Ascending aorta (tissue), 2 donors: ENCODE measurements at regions of chr20 and their contacts with region 1.

Region 1: GRCh38 chr20:17542993-17543412 is 11.8 kb upstream of the BFSP1 start:
- DNase-seq: no peak
- H3K4me3 ChIP-seq: peak overlapping the region in 1 of 2 donors; percentile 10
- H3K27ac ChIP-seq: peak overlapping the region; percentile 69 to 86
- H3K4me1 ChIP-seq: peaks cover 18 to 41% of the 10 kb centered on the region in 2 donors
- H3K27me3 ChIP-seq: no peaks in the 10 kb centered on the region
- CTCF ChIP-seq: no peak

Region 2: DNA sequence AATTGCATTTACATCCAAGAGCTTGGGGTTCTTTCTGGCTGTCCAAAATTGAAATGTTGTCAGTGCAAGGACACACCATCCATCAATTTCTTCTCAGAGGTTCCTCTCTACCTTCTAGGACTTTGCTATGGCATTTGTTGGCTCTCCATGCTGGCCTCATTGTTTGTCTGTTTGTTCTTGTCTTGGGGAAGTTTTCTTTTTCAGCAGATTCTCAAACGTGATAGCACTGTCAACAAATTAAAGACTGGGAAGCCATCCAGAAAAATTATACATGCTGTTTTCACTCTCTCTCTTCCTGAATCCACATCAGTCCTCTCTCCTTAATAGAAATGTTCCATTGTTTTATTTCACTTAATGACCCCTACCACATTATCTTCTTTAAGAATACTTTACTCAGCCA is 185.8 kb before region 1 on chr20:
- intact Hi-C with region 1: no loop called
- DNase-seq: no peak
- H3K4me3 ChIP-seq: no peak overlapping the region
- H3K27ac ChIP-seq: no peak overlapping the region
- H3K4me1 ChIP-seq: no peaks in the 10 kb centered on the region
- H3K27me3 ChIP-seq: no peaks in the 10 kb centered on the region
- CTCF ChIP-seq: no peak

Region 3: DNA sequence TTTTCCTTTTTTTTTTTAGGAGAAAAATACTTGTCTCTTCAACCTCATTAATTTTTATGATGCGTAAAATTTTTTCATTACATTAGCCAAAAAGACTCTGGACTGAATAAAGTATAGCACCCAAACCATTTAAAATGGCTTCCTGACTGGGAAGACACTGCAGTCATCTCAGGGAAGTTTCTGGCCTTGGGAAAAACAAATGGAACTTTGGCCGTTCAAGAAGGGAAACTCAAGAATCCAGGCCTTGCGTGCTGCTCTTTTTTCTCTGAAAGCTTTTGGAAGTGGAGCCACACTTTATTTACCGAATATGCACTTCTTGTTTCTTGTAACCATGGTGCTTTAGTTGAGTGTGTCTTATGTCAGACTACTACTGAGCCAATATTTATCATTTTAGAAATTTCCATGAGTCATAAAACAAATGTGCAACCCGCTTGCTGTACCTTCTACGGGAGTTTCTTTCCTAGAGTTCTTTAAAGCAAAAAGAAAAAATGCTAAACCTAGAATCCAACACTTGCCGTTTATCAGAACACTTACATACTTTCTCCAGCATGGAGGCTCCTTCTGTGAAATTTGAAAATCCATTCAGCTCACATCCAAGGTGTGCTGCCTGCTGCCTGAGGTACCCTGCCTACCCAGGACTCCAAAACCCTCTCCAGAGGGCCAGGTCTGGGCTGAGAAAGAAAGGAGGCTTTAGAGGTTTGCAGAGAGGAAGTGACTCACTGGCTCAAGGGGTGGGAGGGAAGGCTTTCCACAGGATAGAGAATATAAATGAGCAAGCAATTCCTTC is 15.3 kb after region 1 on chr20:
- intact Hi-C with region 1: loop called (anchors 1 kb)
- DNase-seq: peak; percentile 53 to 92
- H3K4me3 ChIP-seq: peak overlapping the region; percentile 8 to 43
- H3K27ac ChIP-seq: peak overlapping the region; percentile 98 to 100
- H3K4me1 ChIP-seq: peaks cover 24 to 64% of the 10 kb centered on the region in 2 donors
- H3K27me3 ChIP-seq: no peaks in the 10 kb centered on the region
- CTCF ChIP-seq: no peak